CD14-positive monocyte (primary cell): ENCODE measurements at regions of chr12 and their contacts with region 1.

Region 1: DNA sequence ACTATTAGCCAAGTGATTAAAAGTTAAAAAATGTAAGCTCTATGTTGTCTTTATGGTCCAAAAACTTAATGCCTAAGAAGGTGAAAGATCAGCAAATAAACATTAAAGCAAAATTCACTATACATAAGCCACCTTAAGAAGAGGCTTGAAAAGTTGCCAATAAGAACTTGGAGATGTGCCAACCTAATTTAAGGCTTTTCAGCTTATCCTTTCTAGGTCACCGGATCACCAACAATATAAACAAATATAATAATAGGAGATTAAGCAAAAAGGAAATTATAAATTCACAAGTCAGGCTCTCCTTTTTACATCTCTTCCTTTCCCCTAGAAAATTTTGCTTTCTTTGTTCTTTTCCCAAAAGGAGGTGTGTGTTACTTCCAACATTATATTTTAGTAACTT is 30.9 kb downstream of the SLC2A3 start:
- DNase-seq: no peak
- H3K4me3 ChIP-seq: no peak overlapping the region
- H3K4me3 Mint-ChIP-seq: no peak overlapping the region
- H3K27ac ChIP-seq: no peak overlapping the region
- H3K27ac Mint-ChIP-seq: no peak overlapping the region
- H3K4me1 ChIP-seq: no peaks in the 10 kb centered on the region
- H3K4me1 Mint-ChIP-seq: peaks cover 5% of the 10 kb centered on the region
- H3K27me3 ChIP-seq: no peaks in the 10 kb centered on the region
- H3K27me3 Mint-ChIP-seq: peaks cover 0 to 3% (median 0%) of the 10 kb centered on the region in 3 donors
- CTCF ChIP-seq: no peak

Region 2: GRCh38 chr12:7797698-7798398 is 107.2 kb before region 1 on chr12:
- intact Hi-C with region 1: loop called in 1 of 2 experiments (anchors 2 kb)
- DNase-seq: no peak
- H3K4me3 ChIP-seq: no peak overlapping the region
- H3K4me3 Mint-ChIP-seq: no peak overlapping the region
- H3K27ac ChIP-seq: no peak overlapping the region
- H3K27ac Mint-ChIP-seq: peak overlapping the region in 1 of 7 donors; percentile 25
- H3K4me1 ChIP-seq: peaks cover 15 to 26% of the 10 kb centered on the region in 2 donors
- H3K4me1 Mint-ChIP-seq: peaks cover 34% of the 10 kb centered on the region
- H3K27me3 ChIP-seq: no peaks in the 10 kb centered on the region
- H3K27me3 Mint-ChIP-seq: peaks cover 0 to 2% (median 0%) of the 10 kb centered on the region in 3 donors
- CTCF ChIP-seq: no peak

Region 3: DNA sequence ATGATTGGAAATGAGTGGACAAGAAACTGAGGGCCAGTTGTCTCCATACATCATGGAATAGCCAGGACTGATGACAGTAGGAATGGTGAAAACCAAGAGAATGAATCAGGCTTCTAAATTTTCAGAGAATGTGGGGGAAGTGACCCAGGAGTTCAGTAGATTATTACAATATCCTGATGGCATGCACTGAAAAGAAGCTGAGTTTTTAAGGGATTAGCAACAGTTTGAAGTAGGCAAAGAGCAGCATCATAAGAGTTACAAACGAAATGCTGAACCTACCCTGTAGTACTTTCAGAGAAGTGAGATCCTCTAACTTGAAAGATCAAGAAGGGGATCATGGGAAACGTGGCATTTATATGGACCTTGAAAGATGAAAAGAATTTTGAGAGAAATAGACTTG is 45.5 kb before region 1 on chr12:
- intact Hi-C with region 1: no loop called
- DNase-seq: no peak
- H3K4me3 ChIP-seq: no peak overlapping the region
- H3K4me3 Mint-ChIP-seq: no peak overlapping the region
- H3K27ac ChIP-seq: no peak overlapping the region
- H3K27ac Mint-ChIP-seq: peak overlapping the region in 2 of 7 donors; percentile 11 to 13
- H3K4me1 ChIP-seq: peaks cover 0 to 6% of the 10 kb centered on the region in 2 donors
- H3K4me1 Mint-ChIP-seq: peaks cover 26% of the 10 kb centered on the region
- H3K27me3 ChIP-seq: no peaks in the 10 kb centered on the region
- H3K27me3 Mint-ChIP-seq: peaks cover 0 to 9% (median 2%) of the 10 kb centered on the region in 3 donors
- CTCF ChIP-seq: no peak